Heart right ventricle (tissue), 16 donors: ENCODE measurements at regions of chr13 and their contacts with region 1.

Region 1: DNA sequence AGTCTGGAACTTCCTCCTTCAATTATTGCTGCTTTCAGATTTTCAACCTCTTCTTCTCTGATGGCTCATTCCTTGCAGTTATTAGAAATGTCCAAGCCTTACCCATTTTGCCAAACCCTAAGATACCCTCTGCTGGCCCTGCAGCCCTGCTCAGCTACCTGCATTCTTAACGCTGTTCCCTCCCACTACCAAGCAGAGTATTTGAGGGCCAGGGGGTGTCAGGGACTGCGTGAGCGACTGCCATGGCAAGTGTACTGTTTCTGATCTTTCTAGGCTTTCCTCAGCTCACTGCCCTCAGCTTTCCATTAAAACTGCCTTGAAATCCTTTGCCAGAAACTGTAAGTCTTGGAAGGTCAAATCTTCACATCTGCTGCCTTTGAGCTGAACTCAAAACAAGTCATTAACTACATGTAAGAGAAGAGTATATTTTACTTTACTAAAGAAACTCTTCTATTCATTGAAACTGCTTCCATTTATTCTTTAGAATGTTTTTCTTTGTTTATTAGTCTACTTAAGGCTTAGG is 41.0 kb downstream of the HS6ST3 start:
- DNase-seq: no peak
- ATAC-seq: no peak
- H3K4me3 ChIP-seq: no peak overlapping the region
- H3K27ac ChIP-seq: no peak overlapping the region
- H3K4me1 ChIP-seq: no peaks in the 10 kb centered on the region
- H3K27me3 ChIP-seq: no peaks in the 10 kb centered on the region
- CTCF ChIP-seq: no peak

Region 2: GRCh38 chr13:96082640-96083039 is 48.2 kb before region 1 on chr13:
- intact Hi-C with region 1: loop called in 1 of 10 experiments (anchors 1 kb)
- DNase-seq: no peak
- ATAC-seq: no peak
- H3K4me3 ChIP-seq: no peak overlapping the region
- H3K27ac ChIP-seq: no peak overlapping the region
- H3K4me1 ChIP-seq: no peaks in the 10 kb centered on the region
- H3K27me3 ChIP-seq: peaks cover 0 to 59% (median 32%) of the 10 kb centered on the region in 7 donors
- CTCF ChIP-seq: no peak